Pancreas (tissue), 10 donors: ENCODE measurements at regions of chrX and their contacts with region 1.

Region 1: DNA sequence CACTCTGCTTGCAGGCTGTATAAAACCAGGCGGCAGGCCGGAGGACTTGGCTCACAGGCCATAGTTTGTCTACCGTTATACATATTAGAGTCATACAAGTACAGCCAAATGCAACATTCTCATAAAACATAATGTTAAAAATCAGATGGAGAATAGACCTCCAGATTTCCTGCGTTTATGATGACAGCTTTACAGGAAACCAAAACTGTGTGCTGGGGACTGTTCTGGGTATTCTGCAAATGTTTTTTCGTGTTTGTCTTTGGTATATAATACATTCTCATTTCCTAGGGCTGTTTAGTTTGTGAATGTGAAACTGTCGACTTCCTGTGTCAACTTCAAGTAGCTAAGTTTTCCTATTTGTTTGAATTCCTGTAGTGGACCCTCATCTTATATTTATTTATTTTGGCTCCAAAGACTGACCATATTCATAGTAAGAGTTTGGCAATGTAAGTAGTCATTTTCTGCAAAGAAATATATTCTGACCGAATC is 79.5 kb upstream of the FAM9C start:
- DNase-seq: no peak
- ATAC-seq: no peak
- H3K4me3 ChIP-seq: no peak overlapping the region
- H3K27ac ChIP-seq: peak overlapping the region in 2 of 4 donors; percentile 39 to 42
- H3K4me1 ChIP-seq: peaks cover 0 to 13% (median 4%) of the 10 kb centered on the region in 3 donors
- H3K27me3 ChIP-seq: no peaks in the 10 kb centered on the region
- CTCF ChIP-seq: no peak

Region 2: DNA sequence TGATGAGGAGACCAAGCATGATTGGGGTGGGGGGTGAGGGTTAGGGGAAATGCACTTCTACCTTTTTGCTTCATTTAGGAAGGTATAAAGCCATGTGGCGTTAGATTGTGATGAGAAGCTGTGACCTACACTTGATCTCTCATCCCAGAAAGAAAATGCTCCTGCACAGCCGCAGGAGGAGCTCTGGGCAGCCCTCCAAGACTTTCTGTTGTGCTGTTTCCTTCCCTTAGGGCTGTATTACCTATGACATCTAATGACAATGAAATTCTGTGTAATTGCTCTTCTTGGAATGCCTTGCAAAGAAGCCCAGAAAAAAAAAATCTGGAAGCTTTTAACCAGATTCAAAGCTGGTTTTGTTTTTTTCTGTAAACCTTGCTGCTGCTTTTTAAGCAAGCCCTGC is 319.2 kb before region 1 on chrX:
- intact Hi-C with region 1: no loop called
- DNase-seq: no peak
- ATAC-seq: no peak
- H3K4me3 ChIP-seq: no peak overlapping the region
- H3K27ac ChIP-seq: no peak overlapping the region
- H3K4me1 ChIP-seq: no peaks in the 10 kb centered on the region
- H3K27me3 ChIP-seq: peaks cover 0 to 3% (median 0%) of the 10 kb centered on the region in 4 donors
- CTCF ChIP-seq: no peak

Region 3: GRCh38 chrX:12984629-12985319 is 139.1 kb before region 1 on chrX:
- intact Hi-C with region 1: loop called in 1 of 3 experiments (anchors 10 kb)
- DNase-seq: peak; percentile 64 to 84 (median 75)
- ATAC-seq: peak; percentile 24 to 49 (median 42)
- H3K4me3 ChIP-seq: no peak overlapping the region
- H3K27ac ChIP-seq: peak overlapping the region in 2 of 4 donors; percentile 43 to 68
- H3K4me1 ChIP-seq: peaks cover 9 to 26% (median 15%) of the 10 kb centered on the region in 3 donors
- H3K27me3 ChIP-seq: no peaks in the 10 kb centered on the region
- CTCF ChIP-seq: no peak